Dendritic cell treated with granulocyte-macrophage colony-stimulating factor and Interleukin-4, amounts not matched to agents 40 ng/mL and 50 ng/mL, for 4 days (primary cell): ENCODE measurements at regions of chr1 and their contacts with region 1.

Region 1: GRCh38 chr1:39973503-39974135 is 18.7 kb downstream of the MFSD2A start:
- H3K4me3 Mint-ChIP-seq: no peak overlapping the region
- H3K27ac Mint-ChIP-seq: no peak overlapping the region
- H3K4me1 Mint-ChIP-seq: peaks cover 26% of the 10 kb centered on the region
- H3K27me3 Mint-ChIP-seq: peaks cover 2% of the 10 kb centered on the region

Region 2: GRCh38 chr1:39816415-39817090 is 157.1 kb before region 1 on chr1:
- intact Hi-C with region 1: loop called (anchors 1 kb)
- H3K4me3 Mint-ChIP-seq: peak overlapping the region; percentile 57
- H3K27ac Mint-ChIP-seq: peak overlapping the region; percentile 75
- H3K4me1 Mint-ChIP-seq: peaks cover 29% of the 10 kb centered on the region
- H3K27me3 Mint-ChIP-seq: no peaks in the 10 kb centered on the region

Region 3: GRCh38 chr1:39901698-39902459 is 71.7 kb before region 1 on chr1 and contains the start of gene MYCL:
- intact Hi-C with region 1: loop called (anchors 5 kb)
- H3K4me3 Mint-ChIP-seq: peak within 1 kb of the TSS; percentile 87
- H3K27ac Mint-ChIP-seq: peak within 1 kb of the TSS; percentile 78
- H3K4me1 Mint-ChIP-seq: peaks cover 68% of the 10 kb centered on the region
- H3K27me3 Mint-ChIP-seq: peaks cover 7% of the 10 kb centered on the region

Region 4: DNA sequence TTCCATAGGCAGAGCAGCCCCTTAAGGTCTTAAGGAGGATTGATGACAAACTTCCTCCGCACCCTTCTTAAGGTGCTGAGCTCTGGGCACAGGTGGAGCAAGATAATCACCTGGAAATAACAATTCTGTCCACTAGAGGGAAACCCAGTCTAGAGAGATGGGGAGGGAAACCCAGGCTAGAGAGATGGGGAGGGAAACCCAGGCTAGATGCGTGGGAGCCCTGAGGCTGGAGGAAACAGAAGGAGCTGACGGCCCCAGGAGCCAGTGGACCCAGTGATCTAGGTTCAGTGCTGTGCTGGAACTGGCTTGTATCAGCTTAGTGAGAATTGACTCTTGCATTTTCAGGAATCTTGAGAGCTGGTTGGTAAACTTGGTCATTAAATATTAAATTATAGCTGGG is 54.1 kb before region 1 on chr1:
- intact Hi-C with region 1: loop called (anchors 1 kb)
- H3K4me3 Mint-ChIP-seq: no peak overlapping the region
- H3K27ac Mint-ChIP-seq: no peak overlapping the region
- H3K4me1 Mint-ChIP-seq: peaks cover 7% of the 10 kb centered on the region
- H3K27me3 Mint-ChIP-seq: no peaks in the 10 kb centered on the region

Region 5: GRCh38 chr1:40029608-40030007 is 56.0 kb after region 1 on chr1:
- intact Hi-C with region 1: loop called (anchors 10 kb)
- H3K4me3 Mint-ChIP-seq: no peak overlapping the region
- H3K27ac Mint-ChIP-seq: peak overlapping the region; percentile 5
- H3K4me1 Mint-ChIP-seq: peaks cover 40% of the 10 kb centered on the region
- H3K27me3 Mint-ChIP-seq: peaks cover 1% of the 10 kb centered on the region

Region 6: DNA sequence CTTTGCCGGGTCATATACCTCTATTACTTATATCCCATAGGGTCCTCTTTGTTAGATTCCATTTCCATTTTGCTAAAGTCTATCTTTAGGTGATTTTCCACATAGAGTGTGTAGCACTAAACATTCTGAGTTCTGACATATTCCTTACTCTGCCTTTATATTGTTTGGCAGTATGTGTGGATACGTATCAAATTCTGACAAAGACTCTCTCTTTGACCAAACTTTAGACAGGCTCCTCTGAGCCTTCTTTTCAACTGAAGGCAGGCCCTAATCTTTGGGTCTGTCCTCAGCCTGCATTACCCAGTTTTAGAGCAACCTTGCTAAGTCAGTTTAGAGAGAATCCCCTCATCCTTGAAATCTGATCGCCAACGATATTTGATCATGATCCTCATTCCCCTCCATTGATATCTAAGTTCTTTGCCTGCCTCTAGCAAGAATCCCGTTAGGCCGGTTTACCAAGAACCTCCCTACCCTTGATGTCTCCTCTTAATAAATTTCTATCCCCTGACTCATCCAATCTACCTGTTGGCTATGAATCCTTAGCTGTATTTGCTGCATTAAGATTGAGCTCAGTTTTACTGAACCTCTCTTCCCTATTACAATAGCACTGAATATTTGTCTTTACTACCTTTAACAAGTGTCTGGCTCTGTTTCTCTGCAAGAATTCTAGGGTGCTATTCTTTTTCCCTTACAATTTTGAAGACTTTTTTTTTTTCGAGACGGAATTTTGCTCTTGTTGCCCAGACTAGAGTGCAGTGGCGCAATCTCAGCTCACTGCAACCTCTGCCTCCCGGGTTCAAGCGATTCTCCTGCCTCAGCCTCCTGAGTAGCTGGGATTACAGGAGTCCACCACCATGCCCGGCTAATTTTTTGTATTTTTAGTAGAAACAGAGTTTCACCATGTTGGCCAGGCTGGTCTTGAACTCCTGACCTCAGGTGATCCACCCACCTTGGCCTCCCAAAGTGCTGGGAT is 134.0 kb after region 1 on chr1:
- intact Hi-C with region 1: no loop called
- H3K4me3 Mint-ChIP-seq: no peak overlapping the region
- H3K27ac Mint-ChIP-seq: no peak overlapping the region
- H3K4me1 Mint-ChIP-seq: peaks cover 6% of the 10 kb centered on the region
- H3K27me3 Mint-ChIP-seq: no peaks in the 10 kb centered on the region

Region 7: GRCh38 chr1:40462956-40463590 is 489.5 kb after region 1 on chr1:
- intact Hi-C with region 1: no loop called
- H3K4me3 Mint-ChIP-seq: no peak overlapping the region
- H3K27ac Mint-ChIP-seq: no peak overlapping the region
- H3K4me1 Mint-ChIP-seq: no peaks in the 10 kb centered on the region
- H3K27me3 Mint-ChIP-seq: no peaks in the 10 kb centered on the region